ENCODE measurements at regions of chr2 and their contacts with region 1.

Region 1: DNA sequence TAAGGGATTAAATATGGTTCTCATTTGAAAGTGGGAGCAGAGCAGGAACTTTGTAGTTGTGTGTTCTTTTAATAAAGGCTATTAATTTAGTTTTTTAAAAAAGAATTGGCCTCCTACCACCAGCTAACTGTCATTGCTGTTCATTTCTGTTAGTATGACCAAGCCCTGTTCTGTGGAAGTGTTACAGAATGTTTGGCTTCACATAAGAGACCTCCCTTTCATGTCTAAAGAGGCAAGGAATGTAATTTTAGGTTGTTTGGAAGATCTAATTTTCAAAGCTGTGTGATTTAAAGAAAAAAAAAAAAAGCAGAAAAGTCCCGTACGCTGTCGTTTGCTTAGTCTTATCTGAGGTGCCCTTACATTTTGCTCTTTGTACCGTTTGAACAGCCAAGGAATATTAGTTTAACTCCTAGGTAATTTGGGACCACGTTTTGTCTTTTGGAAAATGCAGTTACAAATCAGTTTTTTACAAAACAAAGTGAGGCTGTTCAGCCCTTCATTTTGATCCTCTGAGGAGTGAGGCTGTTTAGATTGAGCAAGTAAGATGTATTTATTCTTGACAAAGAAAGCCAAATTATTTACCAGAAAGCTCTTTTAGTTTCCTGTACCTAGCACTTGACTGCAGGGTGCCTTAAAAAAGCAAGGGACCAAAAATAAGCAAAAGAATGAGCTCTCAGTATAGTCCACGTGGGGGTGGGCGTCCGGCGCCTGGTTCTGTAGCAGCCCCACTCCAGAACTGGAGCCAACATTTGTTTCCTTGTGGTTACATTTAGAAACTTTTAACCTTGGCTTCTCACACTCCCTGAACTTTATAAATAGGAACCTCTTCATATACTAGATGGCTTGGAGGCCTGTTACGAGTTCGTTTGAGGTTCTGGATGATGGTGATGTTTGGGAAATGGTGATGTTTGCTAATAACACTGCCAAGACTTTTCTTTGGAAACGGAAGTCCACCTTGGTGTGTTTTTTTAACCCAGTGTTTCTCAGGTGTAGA is 136.2 kb downstream of the FMNL2 start:
- DNase-seq: no peak
- H3K4me3 ChIP-seq: no peak overlapping the region
- H3K4me3 Mint-ChIP-seq: peak overlapping the region; percentile 42
- H3K27ac Mint-ChIP-seq: peak overlapping the region; percentile 63
- H3K4me1 ChIP-seq: peaks cover 59% of the 10 kb centered on the region
- H3K4me1 Mint-ChIP-seq: peaks cover 46% of the 10 kb centered on the region
- H3K27me3 ChIP-seq: no peaks in the 10 kb centered on the region
- H3K27me3 Mint-ChIP-seq: no peaks in the 10 kb centered on the region
- CTCF ChIP-seq: no peak

Region 2: DNA sequence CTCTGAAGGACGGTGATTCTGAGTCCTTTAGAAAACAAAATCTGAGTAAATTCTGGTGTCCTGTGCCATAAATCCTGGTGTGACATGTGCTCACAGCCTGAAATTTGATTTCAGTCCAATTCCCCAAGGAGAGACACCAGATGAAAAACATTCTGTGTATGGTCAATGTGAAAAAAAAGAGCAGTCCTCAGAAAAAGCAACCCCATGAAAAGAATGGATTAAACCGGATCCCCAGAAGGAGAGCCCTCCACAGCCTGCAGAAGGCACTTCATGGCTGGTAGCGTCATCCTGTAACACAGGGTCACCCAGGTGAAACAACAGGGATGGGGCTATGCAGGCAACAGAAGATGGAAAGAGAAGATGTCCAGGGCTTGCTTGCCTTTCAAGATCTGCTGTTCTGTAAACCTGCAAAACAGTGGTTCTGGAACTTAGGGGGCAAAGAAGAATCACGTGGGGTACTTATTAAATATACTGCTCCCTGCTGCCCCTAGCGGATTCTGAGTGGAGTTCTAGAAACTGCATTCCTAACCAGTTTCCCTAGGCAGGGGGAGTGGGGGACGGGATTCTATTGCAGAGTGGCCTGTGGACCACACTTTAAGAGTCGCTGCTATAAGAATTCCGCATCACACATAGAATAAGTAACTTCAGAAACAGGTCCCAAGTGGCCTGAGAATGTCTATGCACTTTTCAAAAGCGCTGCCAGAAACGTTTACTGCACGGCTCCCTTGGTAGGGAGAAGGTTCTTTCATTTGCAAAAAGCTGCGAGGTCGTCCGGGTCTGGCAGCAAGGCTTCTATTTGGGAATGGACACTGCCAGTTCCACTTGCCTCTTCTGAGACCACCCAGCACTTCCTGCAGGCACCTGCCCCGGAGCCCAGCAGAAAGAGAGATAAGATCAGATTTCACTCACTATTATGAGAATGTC is 524.0 kb before region 1 on chr2:
- CTCF ChIA-PET with region 1: no interaction called
- POLR2A ChIA-PET with region 1: no interaction called
- intact Hi-C with region 1: no loop called
- DNase-seq: peak in 1 of 2 experiments; percentile 47
- H3K4me3 ChIP-seq: no peak overlapping the region
- H3K4me3 Mint-ChIP-seq: no peak overlapping the region
- H3K27ac Mint-ChIP-seq: no peak overlapping the region
- H3K4me1 ChIP-seq: no peaks in the 10 kb centered on the region
- H3K4me1 Mint-ChIP-seq: no peaks in the 10 kb centered on the region
- H3K27me3 ChIP-seq: no peaks in the 10 kb centered on the region
- H3K27me3 Mint-ChIP-seq: peaks cover 7% of the 10 kb centered on the region
- CTCF ChIP-seq: peak; percentile 47 to 52

Region 3: DNA sequence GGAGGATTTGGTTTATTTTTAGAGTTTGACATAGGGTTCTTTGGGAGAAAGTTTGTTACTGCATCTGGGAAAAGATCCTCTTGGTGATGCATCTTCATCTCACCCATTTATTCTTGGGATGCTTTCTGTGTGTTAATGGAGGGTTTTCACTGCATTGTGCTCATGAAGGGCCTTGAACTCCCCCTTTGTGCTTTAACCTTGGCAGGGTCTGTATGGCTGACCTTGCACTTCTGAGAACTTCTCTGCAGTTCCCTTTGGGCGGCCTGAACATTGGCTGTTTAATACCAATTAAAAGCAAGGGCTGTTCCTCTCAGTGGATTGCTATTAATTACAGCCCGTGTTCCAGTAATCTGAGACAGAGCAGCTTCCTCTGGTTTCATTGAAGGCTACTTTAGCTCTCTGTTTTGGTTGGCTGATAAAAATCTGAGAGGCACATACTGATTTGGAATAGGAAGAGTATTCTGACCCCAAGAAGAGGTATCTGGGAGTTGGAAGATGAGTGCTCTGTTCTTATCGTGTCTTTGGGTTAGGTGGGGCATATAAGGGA is 98.6 kb before region 1 on chr2:
- CTCF ChIA-PET with region 1: no interaction called
- POLR2A ChIA-PET with region 1: no interaction called
- intact Hi-C with region 1: loop called (anchors 5 kb)
- DNase-seq: no peak
- H3K4me3 ChIP-seq: no peak overlapping the region
- H3K4me3 Mint-ChIP-seq: no peak overlapping the region
- H3K27ac Mint-ChIP-seq: no peak overlapping the region
- H3K4me1 ChIP-seq: peaks cover 10% of the 10 kb centered on the region
- H3K4me1 Mint-ChIP-seq: peaks cover 13% of the 10 kb centered on the region
- H3K27me3 ChIP-seq: no peaks in the 10 kb centered on the region
- H3K27me3 Mint-ChIP-seq: no peaks in the 10 kb centered on the region
- CTCF ChIP-seq: no peak

Region 4: DNA sequence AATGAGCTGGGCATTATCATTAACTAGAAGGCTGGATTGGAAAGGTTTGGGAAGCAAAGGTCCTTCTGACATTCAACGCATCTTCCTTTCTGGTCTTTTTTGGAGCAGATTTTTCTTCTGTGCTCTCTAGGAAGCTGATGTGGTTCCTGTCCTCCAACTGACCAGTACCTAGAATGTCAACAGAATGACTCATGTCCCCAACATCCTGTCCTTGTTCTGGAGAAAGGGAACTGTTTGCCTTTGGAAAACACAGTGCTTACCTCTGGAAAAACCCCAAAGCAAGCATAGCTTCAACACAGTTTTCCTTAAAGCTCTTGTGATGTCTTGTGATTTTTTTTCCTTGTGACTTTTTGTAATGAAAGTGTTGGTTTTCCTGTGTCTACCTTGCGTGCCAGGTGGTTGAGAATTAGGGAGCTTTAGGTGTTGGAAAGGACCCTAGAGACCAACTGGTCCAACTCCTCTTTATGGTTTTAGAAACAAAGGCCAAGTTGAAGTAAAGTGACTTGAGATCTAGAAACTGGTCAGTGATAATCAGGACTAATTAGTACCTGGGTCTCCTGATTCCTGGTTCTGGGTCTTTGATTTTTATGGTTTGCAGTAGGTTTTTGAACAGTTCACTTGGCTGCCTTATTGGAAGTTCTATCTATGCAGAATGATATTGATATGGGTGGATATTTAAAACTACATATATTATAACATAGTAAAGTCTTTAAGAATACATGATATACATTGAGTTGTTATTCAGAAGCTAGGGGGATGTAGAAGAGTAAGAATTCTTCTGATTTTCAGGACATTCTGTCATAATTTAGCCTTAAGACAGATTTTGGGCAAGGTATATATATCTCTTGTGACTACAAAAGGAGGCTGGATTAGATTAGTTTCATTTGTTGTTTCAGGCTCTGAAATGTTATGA is 65.7 kb before region 1 on chr2:
- CTCF ChIA-PET with region 1: no interaction called
- POLR2A ChIA-PET with region 1: no interaction called
- intact Hi-C with region 1: loop called (anchors 1 kb)
- DNase-seq: peak in 1 of 2 experiments; percentile 34
- H3K4me3 ChIP-seq: no peak overlapping the region
- H3K4me3 Mint-ChIP-seq: no peak overlapping the region
- H3K27ac Mint-ChIP-seq: peak overlapping the region; percentile 77
- H3K4me1 ChIP-seq: peaks cover 33% of the 10 kb centered on the region
- H3K4me1 Mint-ChIP-seq: peaks cover 72% of the 10 kb centered on the region
- H3K27me3 ChIP-seq: no peaks in the 10 kb centered on the region
- H3K27me3 Mint-ChIP-seq: no peaks in the 10 kb centered on the region
- CTCF ChIP-seq: no peak

Region 5: DNA sequence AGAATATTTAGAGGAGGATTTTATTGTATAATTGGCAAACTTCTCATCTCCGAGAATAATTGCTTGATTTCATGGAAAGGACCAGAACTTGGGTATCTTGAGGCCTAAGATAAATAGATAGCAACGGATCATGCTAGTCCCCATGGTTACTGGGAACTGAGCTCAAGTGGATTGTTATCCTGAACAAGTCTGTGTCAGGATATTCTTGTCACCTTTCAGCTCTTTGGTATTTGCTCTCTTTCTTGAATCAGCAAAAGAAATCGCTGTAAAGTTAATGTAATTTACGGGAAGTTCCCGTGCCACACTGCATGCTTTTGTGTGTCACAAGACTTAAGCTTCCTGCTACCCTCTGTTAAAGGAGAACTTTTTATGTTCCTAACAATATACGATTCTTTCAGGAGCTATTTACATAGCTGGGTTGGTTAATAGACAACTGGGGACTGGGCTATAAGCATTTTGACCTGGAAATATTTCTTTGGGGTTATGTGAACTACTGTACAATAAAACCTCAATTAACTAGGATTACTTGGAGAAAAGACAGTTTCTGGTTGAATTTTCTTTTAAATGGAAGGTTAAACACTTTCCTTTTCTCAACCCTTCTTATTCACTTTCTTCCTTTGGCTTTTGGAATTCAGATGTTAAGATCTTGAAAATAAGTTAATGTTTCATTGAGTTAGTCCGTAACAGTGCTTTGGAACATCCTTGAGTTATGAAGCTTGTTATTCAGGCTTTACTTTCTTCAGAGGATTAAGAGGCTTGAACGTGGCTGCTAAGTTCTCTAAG is 15.0 kb after region 1 on chr2:
- CTCF ChIA-PET with region 1: interaction called, 5 read pairs
- POLR2A ChIA-PET with region 1: no interaction called
- intact Hi-C with region 1: loop called (anchors 1 kb)
- DNase-seq: peak; percentile 43 to 61
- H3K4me3 ChIP-seq: no peak overlapping the region
- H3K4me3 Mint-ChIP-seq: peak overlapping the region; percentile 7
- H3K27ac Mint-ChIP-seq: peak overlapping the region; percentile 38
- H3K4me1 ChIP-seq: peaks cover 60% of the 10 kb centered on the region
- H3K4me1 Mint-ChIP-seq: peaks cover 51% of the 10 kb centered on the region
- H3K27me3 ChIP-seq: no peaks in the 10 kb centered on the region
- H3K27me3 Mint-ChIP-seq: no peaks in the 10 kb centered on the region
- CTCF ChIP-seq: no peak

Region 6: DNA sequence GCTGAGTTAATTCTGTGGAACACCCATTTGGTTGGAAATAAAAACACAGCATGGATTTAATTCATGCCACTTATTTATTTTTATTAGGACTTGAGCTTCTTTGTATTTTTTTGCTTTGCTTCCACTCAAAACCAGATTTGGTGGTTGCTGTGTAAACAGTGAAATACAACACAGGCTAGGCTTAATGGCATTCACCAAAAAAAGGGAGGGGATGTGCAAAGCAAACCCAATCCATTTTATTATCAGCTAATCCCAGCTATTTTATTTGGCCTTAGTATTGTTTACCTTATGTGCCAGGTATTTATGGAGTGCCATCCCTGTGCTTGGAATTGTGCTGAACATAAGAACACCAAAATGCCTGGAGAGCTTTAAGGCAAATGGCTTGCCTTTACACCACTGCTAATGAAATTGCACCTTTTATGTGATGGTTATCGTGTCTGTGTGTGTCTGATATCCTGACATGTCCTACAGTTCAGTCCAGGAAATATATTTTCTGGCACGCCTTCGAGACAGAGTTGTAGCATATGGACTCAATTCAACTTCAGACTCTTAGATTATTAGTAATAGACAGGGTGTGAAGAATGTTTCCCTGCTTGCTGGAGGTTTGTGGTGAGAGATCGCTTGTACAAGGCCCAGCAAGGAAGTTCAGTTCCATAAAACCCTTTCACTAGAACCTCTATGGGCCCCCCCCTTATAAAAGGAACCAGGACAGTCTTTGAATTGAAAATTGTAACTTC is 146.5 kb after region 1 on chr2:
- CTCF ChIA-PET with region 1: no interaction called
- POLR2A ChIA-PET with region 1: no interaction called
- intact Hi-C with region 1: loop called (anchors 5 kb)
- DNase-seq: no peak
- H3K4me3 ChIP-seq: no peak overlapping the region
- H3K4me3 Mint-ChIP-seq: no peak overlapping the region
- H3K27ac Mint-ChIP-seq: no peak overlapping the region
- H3K4me1 ChIP-seq: peaks cover 22% of the 10 kb centered on the region
- H3K4me1 Mint-ChIP-seq: peaks cover 17% of the 10 kb centered on the region
- H3K27me3 ChIP-seq: no peaks in the 10 kb centered on the region
- H3K27me3 Mint-ChIP-seq: no peaks in the 10 kb centered on the region
- CTCF ChIP-seq: no peak

Region 7: DNA sequence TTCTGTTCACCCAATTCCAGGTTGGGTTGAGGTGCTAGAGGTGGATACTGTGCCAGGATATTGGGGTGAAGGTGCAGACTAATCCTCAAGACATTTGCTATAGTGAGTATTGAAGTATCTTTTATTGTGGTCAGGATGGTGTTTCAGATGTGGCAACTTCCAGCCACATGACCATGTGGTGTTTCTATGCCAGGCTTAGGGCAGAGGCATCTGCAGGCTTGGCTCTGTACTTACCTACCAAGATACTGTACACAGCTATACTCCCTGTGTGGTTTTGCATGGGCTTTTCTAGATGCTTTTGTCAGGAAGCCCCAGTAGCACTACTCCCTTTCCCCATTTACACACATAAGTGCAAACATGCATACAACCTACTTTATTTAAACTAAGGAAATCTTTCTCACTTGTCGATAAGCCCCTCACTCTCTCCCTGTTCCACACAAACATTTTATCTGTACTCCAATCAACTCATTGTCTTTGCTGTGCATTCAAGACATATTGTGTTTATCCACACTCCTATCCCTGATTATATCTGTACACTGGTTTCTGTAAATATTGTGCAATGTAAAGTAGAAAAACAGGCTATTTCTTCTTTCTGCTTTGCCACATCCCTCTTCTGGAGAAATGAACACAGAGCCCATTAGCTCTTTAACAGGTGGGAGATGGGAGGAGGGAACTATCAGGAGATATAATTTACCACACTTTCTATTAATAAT is 259.6 kb after region 1 on chr2:
- CTCF ChIA-PET with region 1: no interaction called
- POLR2A ChIA-PET with region 1: no interaction called
- intact Hi-C with region 1: no loop called
- DNase-seq: peak in 1 of 2 experiments; percentile 9
- H3K4me3 ChIP-seq: no peak overlapping the region
- H3K4me3 Mint-ChIP-seq: no peak overlapping the region
- H3K27ac Mint-ChIP-seq: no peak overlapping the region
- H3K4me1 ChIP-seq: no peaks in the 10 kb centered on the region
- H3K4me1 Mint-ChIP-seq: peaks cover 7% of the 10 kb centered on the region
- H3K27me3 ChIP-seq: no peaks in the 10 kb centered on the region
- H3K27me3 Mint-ChIP-seq: no peaks in the 10 kb centered on the region
- CTCF ChIP-seq: no peak

Measured in Caco-2 (cell line).